Common myeloid progenitor, CD34-positive (primary cell): ENCODE measurements at regions of chr15 and their contacts with region 1.

Region 1: GRCh38 chr15:78075490-78076230 is 1.9 kb downstream of the TBC1D2B start:
- DNase-seq: peak in 1 of 3 donors; percentile 19
- H3K4me3 ChIP-seq: peak overlapping the region in 6 of 7 experiments; percentile 13 to 94 (median 86)
- H3K27ac ChIP-seq: peak overlapping the region; percentile 25 to 51
- H3K4me1 ChIP-seq: peaks cover 0 to 56% (median 49%) of the 10 kb centered on the region in 4 experiments
- H3K27me3 ChIP-seq: no peaks in the 10 kb centered on the region

Region 2: DNA sequence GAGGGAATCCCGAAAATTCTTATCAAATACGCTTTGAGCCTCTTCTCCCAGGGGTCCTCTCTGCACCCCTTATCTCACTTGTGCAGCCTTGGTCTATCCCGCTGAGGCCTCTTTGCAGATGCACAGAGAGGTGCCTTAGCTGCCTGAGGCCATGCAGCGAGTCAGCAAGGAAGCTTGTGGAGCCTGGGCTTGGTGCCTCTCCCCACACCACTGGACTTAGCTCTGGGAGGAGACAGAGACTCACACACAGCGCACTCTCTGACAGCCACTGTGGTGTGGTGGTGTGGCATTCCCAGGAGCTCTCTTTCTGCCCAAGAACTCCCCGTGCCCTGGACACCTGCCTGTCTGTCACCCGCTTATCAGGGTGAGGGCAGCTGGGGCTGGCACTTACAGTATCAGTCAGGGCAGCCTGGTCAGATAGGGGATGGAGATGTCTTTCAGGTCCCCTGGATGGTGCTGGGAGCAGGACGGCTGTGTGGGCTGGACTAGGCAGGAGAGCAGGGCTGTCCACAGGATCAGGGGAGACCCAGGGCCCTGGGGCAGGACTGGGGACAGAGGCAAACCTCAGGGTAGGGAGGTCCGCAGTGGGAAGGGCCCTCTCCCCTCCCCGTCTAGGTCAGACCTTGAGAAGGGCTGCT is 432.7 kb before region 1 on chr15:
- CTCF ChIA-PET with region 1: no interaction called
- POLR2A ChIA-PET with region 1: no interaction called
- DNase-seq: no peak
- H3K4me3 ChIP-seq: no peak overlapping the region
- H3K27ac ChIP-seq: no peak overlapping the region
- H3K4me1 ChIP-seq: no peaks in the 10 kb centered on the region
- H3K27me3 ChIP-seq: peaks cover 0 to 11% (median 2%) of the 10 kb centered on the region in 5 experiments

Region 3: GRCh38 chr15:78018946-78019644 is 56.6 kb before region 1 on chr15:
- CTCF ChIA-PET with region 1: interaction called, 11 read pairs
- POLR2A ChIA-PET with region 1: interaction called, 3 read pairs
- DNase-seq: peak; percentile 76 to 97 (median 96)
- H3K4me3 ChIP-seq: peak overlapping the region in 3 of 7 experiments; percentile 26 to 55 (median 52)
- H3K27ac ChIP-seq: peak overlapping the region in 1 of 2 experiments; percentile 80
- H3K4me1 ChIP-seq: peaks cover 12 to 28% (median 20%) of the 10 kb centered on the region in 4 experiments
- H3K27me3 ChIP-seq: no peaks in the 10 kb centered on the region

Region 4: DNA sequence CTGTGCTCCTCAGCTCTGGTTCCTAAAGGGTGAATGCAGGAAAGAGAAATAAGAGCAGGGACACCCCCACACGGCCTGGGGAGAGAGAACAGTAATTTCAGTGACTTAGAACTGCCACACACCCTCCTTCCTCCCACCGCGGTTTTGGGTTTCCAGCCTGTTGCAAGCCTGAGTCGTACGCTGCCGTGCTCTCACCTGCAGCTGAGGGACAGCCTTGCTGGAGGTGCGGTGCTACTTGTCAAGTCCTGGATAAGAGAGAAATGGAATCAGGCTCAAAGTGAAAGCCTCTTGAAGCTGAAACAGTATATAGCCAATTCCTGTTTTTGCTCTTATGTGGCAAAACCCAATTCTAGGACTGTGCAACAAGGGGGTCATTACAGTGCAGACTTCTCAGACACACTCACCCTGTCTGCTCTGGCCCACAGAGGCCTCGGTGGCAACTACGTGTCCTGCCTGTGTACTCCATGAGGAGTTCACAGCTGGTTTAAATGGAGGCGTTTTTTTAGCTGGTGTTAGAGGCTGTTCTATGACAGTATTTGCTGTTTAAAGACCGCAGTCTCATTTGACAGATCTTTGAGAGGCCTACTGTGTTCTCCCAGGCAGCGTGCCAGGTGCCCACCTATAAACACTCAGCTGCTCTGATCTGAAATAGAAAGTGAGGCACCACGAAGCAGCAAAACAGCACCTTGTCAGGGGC is 41.0 kb before region 1 on chr15:
- CTCF ChIA-PET with region 1: interaction called, 10 read pairs
- POLR2A ChIA-PET with region 1: no interaction called
- DNase-seq: peak; percentile 48 to 81 (median 71)
- H3K4me3 ChIP-seq: peak overlapping the region in 5 of 7 experiments; percentile 8 to 60 (median 38)
- H3K27ac ChIP-seq: peak overlapping the region; percentile 25 to 64
- H3K4me1 ChIP-seq: peaks cover 47 to 84% (median 74%) of the 10 kb centered on the region in 4 experiments
- H3K27me3 ChIP-seq: no peaks in the 10 kb centered on the region

Region 5: DNA sequence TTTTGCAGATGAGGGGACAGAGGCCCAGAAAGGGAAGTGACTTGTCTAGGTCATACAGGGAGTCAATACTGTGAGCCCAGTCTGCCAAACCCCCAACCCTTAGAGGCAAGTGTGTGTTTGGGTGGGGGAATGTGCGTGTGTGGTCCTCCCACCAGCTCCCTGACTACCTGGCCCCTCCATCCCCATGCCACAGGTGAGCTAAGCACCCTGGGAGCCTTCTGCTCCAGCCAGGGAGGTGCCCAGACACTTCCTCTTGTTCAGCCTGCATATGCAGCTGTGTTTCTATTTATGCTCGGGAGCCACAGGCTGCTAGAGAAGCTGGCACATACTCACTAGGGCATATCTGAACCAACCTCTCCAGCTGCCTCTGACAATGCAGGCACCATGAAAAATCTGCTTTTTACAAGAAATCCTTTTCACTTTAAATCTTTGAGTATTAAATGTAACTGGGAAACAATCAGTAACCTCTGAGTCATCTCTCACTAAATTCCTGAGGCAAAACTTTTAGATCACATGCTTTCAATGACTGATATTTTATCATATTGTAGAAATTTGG is 18.9 kb before region 1 on chr15:
- CTCF ChIA-PET with region 1: interaction called, 62 read pairs
- POLR2A ChIA-PET with region 1: interaction called, 4 read pairs
- DNase-seq: peak in 2 of 3 donors; percentile 81 to 89
- H3K4me3 ChIP-seq: peak overlapping the region in 2 of 7 experiments; percentile 16 to 33
- H3K27ac ChIP-seq: peak overlapping the region in 1 of 2 experiments; percentile 55
- H3K4me1 ChIP-seq: peaks cover 30 to 91% (median 70%) of the 10 kb centered on the region in 4 experiments
- H3K27me3 ChIP-seq: no peaks in the 10 kb centered on the region

Region 6: DNA sequence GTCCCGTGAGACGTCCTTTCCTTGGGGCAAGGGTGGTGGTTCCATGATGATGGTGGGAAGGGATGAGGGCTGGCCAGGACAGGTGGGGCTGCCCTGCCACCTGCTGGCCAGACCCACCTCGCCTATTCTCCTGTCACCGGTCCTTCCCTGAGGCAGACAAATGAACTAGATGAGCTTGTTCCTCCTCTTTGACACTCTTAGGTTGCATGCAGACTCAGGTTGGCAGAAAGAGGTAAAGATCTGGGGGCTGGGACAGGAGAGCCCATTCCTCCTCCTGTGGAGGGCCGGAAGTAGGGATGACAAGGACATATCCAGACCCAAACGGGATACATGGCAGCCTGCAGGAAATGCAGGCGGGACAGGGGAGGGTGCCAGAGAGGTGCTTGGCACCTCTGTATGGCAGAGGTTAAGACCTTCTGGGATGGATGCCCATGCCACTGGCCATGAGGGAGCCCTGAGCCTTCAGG is 120.1 kb after region 1 on chr15:
- CTCF ChIA-PET with region 1: no interaction called
- POLR2A ChIA-PET with region 1: no interaction called
- DNase-seq: peak; percentile 40 to 58 (median 55)
- H3K4me3 ChIP-seq: no peak overlapping the region
- H3K27ac ChIP-seq: no peak overlapping the region
- H3K4me1 ChIP-seq: no peaks in the 10 kb centered on the region
- H3K27me3 ChIP-seq: peaks cover 0 to 2% (median 0%) of the 10 kb centered on the region in 5 experiments

Region 7: GRCh38 chr15:78299101-78299930 is 223.7 kb after region 1 on chr15 and contains the start of gene SKIC8:
- CTCF ChIA-PET with region 1: no interaction called
- POLR2A ChIA-PET with region 1: no interaction called
- DNase-seq: peak; percentile 88 to 94 (median 93)
- H3K4me3 ChIP-seq: peak within 1 kb of the TSS; percentile 83 to 100 (median 92)
- H3K27ac ChIP-seq: peak within 1 kb of the TSS; percentile 85 to 93
- H3K4me1 ChIP-seq: peaks cover 12 to 25% (median 17%) of the 10 kb centered on the region in 4 experiments
- H3K27me3 ChIP-seq: no peaks in the 10 kb centered on the region